Activated CD4-positive, alpha-beta T cell treated with anti-CD3 and anti-CD28 coated beads for 36 hours (primary cell): ENCODE measurements at regions of chr13 and their contacts with region 1.

Region 1: GRCh38 chr13:20740021-20740420 is 33.7 kb downstream of the EEF1AKMT1 start:
- DNase-seq: no peak
- ATAC-seq: no peak
- H3K4me3 Mint-ChIP-seq: no peak overlapping the region
- H3K27ac Mint-ChIP-seq: no peak overlapping the region
- H3K4me1 Mint-ChIP-seq: no peaks in the 10 kb centered on the region
- H3K27me3 Mint-ChIP-seq: no peaks in the 10 kb centered on the region

Region 2: DNA sequence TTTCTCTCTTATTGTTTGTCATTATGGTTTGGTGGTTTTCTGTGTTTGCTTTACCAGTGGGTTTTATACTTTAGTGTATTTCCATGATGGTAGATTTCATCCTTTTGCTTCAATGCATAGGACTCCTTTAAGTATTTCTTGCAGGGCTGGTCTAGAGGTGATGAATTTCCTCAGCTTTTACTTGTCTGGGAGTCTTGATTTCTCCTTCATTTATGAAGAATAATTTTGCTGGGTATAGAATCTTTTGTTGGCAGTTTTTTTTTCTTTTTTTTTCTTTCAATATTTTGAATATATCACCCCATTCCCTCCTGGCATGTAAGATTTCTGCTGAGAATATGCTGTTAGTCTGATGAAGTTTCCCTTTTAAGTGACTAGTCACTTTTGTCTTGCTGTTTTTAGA is 14.0 kb after region 1 on chr13:
- CTCF ChIA-PET with region 1: no interaction called
- POLR2A ChIA-PET with region 1: no interaction called
- intact Hi-C with region 1: no loop called
- DNase-seq: no peak
- ATAC-seq: no peak
- H3K4me3 Mint-ChIP-seq: no peak overlapping the region
- H3K27ac Mint-ChIP-seq: no peak overlapping the region
- H3K4me1 Mint-ChIP-seq: no peaks in the 10 kb centered on the region
- H3K27me3 Mint-ChIP-seq: no peaks in the 10 kb centered on the region

Region 3: GRCh38 chr13:21014502-21015170 is 274.6 kb after region 1 on chr13:
- CTCF ChIA-PET with region 1: no interaction called
- POLR2A ChIA-PET with region 1: no interaction called
- intact Hi-C with region 1: no loop called
- DNase-seq: no peak
- ATAC-seq: no peak
- H3K4me3 Mint-ChIP-seq: no peak overlapping the region
- H3K27ac Mint-ChIP-seq: no peak overlapping the region
- H3K4me1 Mint-ChIP-seq: peaks cover 28% of the 10 kb centered on the region
- H3K27me3 Mint-ChIP-seq: no peaks in the 10 kb centered on the region

Region 4: DNA sequence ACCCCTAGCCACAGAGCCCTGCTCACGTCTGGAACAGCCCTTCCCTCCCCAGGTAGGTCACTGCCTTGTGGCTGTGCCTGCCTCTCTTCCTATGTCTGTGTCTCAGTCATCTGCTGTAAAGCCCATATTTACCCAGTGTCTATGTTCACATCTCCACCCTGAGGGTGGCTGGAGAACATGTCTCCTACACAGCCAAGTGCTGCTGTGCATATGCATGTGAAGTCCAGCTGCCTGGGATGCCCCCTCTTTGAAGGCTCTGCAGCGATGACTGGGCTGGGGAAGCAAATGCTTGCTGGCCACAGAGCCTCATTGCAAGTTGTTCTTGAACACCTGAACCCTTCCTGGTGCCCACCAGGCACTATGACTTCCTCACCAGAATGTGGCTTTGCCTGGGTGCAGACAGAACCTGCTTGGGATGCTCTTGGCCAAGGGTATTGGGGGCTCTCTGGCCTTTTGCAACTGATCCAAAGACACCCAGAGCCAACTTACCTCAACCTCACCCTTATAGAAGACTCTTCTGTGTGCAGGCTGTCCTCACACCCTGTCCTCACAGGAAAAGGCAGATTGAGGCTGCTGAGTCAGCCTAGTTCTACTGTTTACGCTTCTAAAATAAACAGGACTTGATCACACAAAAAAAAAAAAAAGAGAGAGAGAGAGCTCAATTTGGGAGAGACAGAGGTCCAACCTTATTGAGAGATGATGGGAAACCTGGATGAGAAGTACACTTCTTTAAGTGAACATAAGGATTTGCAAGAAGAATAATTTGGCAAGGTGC is 462.9 kb after region 1 on chr13:
- CTCF ChIA-PET with region 1: no interaction called
- POLR2A ChIA-PET with region 1: interaction called, 12 read pairs
- intact Hi-C with region 1: no loop called
- DNase-seq: no peak
- ATAC-seq: no peak
- H3K4me3 Mint-ChIP-seq: no peak overlapping the region
- H3K27ac Mint-ChIP-seq: no peak overlapping the region
- H3K4me1 Mint-ChIP-seq: no peaks in the 10 kb centered on the region
- H3K27me3 Mint-ChIP-seq: peaks cover 3% of the 10 kb centered on the region